Posterior cingulate gyrus (tissue), 11 donors: ENCODE measurements at regions of chr18 and their contacts with region 1.

Region 1: GRCh38 chr18:48445540-48445939 is 36.4 kb upstream of the ZBTB7C start:
- DNase-seq: peak in 8 of 10 donors; percentile 34 to 92 (median 69)

Region 2: DNA sequence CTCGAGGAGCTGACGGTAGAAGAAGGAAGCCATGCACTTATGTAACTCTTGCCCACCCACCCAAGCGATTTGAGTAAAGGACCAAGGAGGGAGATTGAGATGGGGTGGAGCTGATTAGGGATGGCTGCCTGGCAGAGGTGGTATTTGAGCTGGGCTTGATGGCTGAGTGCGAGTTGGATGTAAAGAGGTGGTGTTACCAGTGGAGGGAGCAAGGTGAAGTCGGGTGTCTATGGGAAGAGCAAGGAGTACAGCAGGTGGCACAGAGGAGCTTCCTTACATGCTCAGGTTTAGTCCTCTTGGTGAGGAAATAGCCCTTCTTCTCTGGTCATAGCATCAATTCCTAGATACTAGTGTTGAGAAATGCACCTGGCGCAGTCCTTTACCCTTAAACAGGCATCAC is 899.9 kb before region 1 on chr18:
- intact Hi-C with region 1: no loop called
- DNase-seq: no peak

Region 3: DNA sequence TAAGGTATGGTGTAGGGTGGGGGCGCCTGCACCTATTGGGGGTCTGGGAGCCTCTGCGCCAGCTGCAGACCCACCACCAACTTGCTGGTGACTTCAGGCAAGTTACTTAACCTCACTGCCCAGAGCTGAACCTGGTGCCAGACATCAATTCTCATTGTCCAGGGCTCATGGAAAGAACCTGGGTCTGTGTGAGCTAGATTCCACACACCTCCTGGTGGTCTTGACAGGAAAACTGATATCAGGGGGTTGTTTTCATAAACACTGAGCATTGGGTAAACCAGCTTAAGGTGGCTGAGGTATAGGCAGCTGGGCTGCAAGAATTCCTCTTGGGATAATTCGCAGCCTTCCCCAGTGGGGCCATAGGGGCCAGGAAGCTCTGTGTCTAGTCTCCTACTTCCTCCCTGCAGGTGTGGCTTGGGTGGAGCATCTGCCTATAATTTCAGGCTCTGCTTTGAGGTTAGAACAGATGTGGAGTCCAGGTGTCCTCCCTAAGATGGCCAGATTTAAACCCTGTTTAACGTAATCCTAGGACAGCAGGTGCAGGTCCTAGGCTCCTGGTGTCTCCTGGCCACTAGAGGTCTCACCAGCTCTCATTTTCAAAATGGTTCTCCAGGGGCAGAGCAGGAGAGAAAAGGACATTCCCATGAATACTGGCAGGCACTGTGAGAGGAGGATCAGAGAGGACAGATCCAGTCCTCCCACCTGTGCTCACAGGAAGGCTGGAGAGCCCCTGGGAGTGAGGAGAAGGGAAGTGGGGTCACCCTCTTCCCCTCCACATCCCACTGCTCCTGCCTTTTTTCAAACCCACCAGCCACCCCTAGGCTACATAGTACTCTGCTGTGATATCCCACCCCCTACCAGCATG is 414.7 kb before region 1 on chr18:
- intact Hi-C with region 1: loop called (anchors 1 kb)
- DNase-seq: peak in 3 of 10 donors; percentile 46 to 57 (median 50)

Region 4: DNA sequence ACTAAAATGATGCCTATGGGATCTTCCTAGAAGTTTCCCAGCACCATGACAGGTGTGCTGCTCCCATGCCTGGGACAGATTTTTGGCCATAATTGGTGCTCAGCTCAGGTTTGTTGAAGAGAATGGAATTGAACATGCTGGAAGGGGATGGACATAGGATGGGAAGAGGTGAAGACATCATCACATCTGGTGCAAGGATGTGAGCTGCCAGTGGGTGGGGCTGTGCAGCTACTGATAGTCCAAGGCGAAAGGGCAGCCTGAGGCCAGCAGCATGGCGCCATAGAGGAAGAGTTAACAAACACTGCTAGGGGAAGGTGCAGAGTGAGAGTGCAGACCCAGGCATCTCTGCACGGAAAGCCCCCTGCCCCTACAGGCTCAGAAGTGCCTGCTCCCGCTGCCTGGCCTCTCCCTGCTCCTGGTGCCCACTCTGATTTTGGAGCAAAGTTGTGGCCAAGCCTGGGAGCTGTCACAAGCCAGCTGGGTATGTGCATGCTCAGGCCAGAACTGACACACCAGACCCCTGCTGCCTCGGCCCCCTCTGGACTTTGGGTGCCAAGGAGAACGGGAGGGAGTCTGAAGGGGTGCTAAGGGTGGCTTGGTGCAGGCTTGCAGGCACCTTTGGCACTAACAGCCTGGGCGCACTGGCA is 214.9 kb before region 1 on chr18:
- intact Hi-C with region 1: loop called (anchors 1 kb)
- DNase-seq: peak in 6 of 10 donors; percentile 37 to 92 (median 56)

Region 5: DNA sequence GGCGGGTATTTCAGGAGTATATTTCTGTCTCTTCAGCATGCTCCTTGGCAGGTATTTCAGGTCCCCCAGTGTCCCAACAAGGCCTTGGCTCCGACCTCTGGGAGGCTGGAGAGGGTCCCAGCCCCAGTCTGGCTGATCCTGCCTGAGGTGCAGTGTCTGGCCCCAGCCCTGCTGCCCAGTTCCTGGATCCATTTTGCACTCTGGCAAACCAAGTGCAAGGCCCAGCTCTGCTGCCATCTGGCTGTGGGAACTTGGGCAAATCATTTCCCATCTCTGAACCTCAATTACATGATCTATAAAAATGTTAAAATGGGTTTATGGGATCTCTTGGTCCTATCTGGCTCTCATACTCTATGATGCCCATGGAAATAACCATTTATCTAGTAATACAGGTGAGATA is 99.9 kb before region 1 on chr18:
- intact Hi-C with region 1: loop called (anchors 10 kb)
- DNase-seq: peak in 1 of 10 donors; percentile 28

Region 6: DNA sequence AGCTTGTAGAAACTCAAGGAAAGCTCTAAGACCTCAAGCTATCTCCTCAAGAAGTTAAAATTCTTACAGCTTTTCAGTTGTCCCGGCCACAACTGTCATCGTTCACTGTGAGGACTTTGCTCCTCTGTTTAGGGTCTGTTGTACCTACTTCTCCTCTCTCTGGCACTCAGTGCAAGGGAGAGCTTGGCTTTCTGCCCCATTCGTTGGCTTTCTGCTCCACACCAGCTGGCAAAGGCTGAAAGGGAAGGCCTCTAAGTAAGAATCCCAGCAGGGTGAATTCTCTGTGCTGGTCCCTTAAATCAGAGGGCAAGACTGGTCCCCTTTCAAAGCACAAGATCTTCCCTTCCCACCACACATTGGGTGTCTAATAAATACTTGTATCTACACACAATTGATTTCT is 53.7 kb before region 1 on chr18:
- intact Hi-C with region 1: no loop called
- DNase-seq: peak in 1 of 10 donors; percentile 26

Region 7: GRCh38 chr18:48754993-48755473 is 309.5 kb after region 1 on chr18:
- intact Hi-C with region 1: no loop called
- DNase-seq: peak in 2 of 10 donors; percentile 27 to 37

Region 8: DNA sequence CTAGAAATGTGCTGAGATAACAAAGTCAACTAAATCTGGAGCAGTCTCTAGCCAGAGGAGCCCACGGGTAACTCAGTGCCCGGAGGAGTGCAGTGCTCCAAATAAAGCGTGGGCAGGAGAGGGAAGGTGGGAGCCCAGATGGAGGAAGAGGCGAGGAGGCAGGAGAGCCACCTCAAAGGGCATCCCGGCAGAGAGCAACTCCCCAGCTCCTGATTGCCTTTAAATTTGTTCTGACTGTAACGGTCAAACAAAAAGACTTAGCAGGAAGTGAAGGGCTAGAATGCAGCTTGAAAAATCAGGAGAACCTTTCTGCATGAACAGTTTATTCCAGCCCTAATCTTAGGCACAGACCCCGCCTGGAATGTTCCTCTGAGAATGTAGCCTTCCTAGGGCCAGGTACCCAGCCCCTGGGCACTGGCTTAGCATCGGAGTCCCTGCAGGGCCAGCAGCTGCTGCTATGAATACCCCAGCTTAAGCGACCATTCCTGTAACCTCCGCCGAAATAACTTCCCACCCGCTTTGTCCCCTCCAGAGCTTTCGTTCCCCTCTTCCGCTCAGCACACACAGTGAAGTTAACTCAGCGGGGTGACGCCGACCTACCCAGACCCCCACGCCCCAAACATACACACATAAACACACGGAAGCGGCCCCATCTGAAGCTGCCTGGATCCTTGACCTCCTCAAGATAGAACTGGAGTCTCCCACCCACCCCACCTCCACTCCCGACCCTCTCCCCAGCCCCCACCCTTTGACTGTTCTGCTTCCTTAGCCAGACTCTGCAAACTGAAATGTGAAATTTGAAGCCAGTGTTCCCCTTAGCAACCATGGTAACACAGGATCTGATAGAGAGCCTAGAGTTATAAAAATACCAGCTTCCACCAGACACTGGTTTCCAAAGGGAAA is 382.0 kb after region 1 on chr18:
- intact Hi-C with region 1: no loop called
- DNase-seq: peak in 5 of 10 donors; percentile 2 to 73 (median 6)